Caco-2 (cell line): ENCODE measurements at regions of chr2 and their contacts with region 1.

Region 1: DNA sequence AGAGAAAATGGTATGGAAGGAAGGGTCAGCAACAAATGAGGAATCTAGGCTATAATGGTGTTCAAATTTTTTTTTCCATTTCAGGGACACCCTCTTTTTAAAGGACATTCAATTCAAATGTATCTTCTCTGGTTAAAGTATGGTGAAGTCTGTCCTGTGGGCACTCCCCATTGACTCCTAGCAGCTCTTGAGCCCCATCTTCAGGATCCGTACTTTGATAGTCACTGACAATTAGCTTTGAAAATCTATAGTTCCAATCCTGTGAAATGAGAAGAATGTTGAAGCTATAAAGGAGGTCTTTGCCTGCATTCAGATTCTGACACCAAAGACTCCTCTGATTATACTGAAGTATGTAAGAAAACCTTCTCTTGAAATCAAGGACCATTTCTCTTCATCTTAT is 43.3 kb downstream of the KCNH7 start:
- DNase-seq: peak; percentile 35 to 46
- H3K4me3 ChIP-seq: no peak overlapping the region
- H3K4me3 Mint-ChIP-seq: no peak overlapping the region
- H3K27ac Mint-ChIP-seq: no peak overlapping the region
- H3K4me1 ChIP-seq: no peaks in the 10 kb centered on the region
- H3K4me1 Mint-ChIP-seq: peaks cover 7% of the 10 kb centered on the region
- H3K27me3 ChIP-seq: no peaks in the 10 kb centered on the region
- H3K27me3 Mint-ChIP-seq: no peaks in the 10 kb centered on the region
- CTCF ChIP-seq: peak; percentile 40 to 70

Region 2: GRCh38 chr2:162333968-162334367 is 461.3 kb before region 1 on chr2:
- CTCF ChIA-PET with region 1: no interaction called
- POLR2A ChIA-PET with region 1: no interaction called
- intact Hi-C with region 1: loop called (anchors 5 kb)
- DNase-seq: peak; percentile 51
- H3K4me3 ChIP-seq: no peak overlapping the region
- H3K4me3 Mint-ChIP-seq: no peak overlapping the region
- H3K27ac Mint-ChIP-seq: no peak overlapping the region
- H3K4me1 ChIP-seq: no peaks in the 10 kb centered on the region
- H3K4me1 Mint-ChIP-seq: no peaks in the 10 kb centered on the region
- H3K27me3 ChIP-seq: no peaks in the 10 kb centered on the region
- H3K27me3 Mint-ChIP-seq: peaks cover 3% of the 10 kb centered on the region
- CTCF ChIP-seq: peak; percentile 62 to 69

Region 3: DNA sequence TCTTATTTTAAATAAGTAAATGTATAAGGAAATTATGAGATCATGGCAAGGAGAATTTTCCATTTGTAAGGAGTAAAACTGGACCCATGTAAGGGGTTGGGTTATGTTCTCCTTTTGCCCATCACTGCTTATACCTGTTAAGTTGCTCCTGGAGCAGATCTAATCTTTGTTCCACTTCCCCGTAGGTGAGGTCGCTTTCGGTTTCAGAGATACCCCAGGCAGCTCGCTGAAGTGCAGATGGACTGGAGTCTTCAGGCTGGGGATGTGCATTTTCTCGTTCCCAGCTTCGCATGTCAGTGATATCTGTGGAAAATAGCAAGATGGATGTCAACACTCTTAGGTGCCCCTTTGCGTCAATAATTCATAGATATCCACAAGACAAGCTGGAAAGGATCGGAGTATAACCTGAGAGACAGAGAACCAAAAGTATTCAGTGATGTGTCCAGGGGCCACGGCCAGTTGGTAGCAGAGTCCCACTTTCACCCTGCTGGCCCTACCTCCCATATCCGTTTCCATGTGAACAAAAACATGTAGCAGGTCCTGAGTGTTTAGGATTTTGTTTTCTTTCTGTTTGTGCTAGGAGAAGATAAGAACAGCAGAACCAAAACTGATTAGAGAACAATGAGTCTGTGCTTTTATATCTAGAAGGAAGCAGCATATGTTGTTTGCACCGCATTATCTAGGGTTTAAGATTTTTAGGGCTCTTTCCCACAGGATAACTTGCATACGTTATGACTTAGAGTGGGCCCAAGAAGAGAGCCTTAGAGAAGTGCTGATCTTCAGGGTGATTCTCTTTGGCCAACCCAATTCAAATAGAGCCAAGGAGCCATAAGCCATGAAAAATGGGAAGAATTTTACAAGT is 415.4 kb before region 1 on chr2:
- CTCF ChIA-PET with region 1: no interaction called
- POLR2A ChIA-PET with region 1: no interaction called
- intact Hi-C with region 1: loop called (anchors 10 kb)
- DNase-seq: no peak
- H3K4me3 ChIP-seq: no peak overlapping the region
- H3K4me3 Mint-ChIP-seq: no peak overlapping the region
- H3K27ac Mint-ChIP-seq: no peak overlapping the region
- H3K4me1 ChIP-seq: no peaks in the 10 kb centered on the region
- H3K4me1 Mint-ChIP-seq: no peaks in the 10 kb centered on the region
- H3K27me3 ChIP-seq: no peaks in the 10 kb centered on the region
- H3K27me3 Mint-ChIP-seq: peaks cover 11% of the 10 kb centered on the region
- CTCF ChIP-seq: no peak

Region 4: DNA sequence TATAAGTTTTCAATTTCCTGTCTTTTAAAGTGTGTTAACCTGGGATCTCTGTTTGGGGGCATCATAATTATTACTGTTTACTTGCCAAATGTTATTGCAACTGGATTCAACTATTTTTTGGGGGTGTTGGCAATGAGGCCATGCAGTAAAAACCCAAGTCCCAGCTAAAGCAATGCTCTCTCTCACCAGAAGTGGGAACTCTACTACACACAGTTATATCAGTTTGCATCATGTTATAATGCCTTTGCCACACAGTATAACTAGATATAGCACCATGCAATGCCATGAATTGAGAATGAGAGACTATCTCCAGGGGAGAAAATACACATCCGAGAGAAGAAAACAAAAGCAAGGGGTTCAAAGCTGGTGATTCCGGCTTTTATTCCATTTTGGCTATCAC is 372.4 kb before region 1 on chr2:
- CTCF ChIA-PET with region 1: no interaction called
- POLR2A ChIA-PET with region 1: no interaction called
- intact Hi-C with region 1: loop called (anchors 10 kb)
- DNase-seq: no peak
- H3K4me3 ChIP-seq: no peak overlapping the region
- H3K4me3 Mint-ChIP-seq: no peak overlapping the region
- H3K27ac Mint-ChIP-seq: no peak overlapping the region
- H3K4me1 ChIP-seq: no peaks in the 10 kb centered on the region
- H3K4me1 Mint-ChIP-seq: no peaks in the 10 kb centered on the region
- H3K27me3 ChIP-seq: no peaks in the 10 kb centered on the region
- H3K27me3 Mint-ChIP-seq: peaks cover 3% of the 10 kb centered on the region
- CTCF ChIP-seq: no peak

Region 5: GRCh38 chr2:162581959-162582798 is 213.1 kb before region 1 on chr2:
- CTCF ChIA-PET with region 1: no interaction called
- POLR2A ChIA-PET with region 1: no interaction called
- intact Hi-C with region 1: loop called (anchors 1 kb)
- DNase-seq: peak; percentile 77 to 84
- H3K4me3 ChIP-seq: no peak overlapping the region
- H3K4me3 Mint-ChIP-seq: no peak overlapping the region
- H3K27ac Mint-ChIP-seq: peak overlapping the region; percentile 62
- H3K4me1 ChIP-seq: peaks cover 46% of the 10 kb centered on the region
- H3K4me1 Mint-ChIP-seq: peaks cover 47% of the 10 kb centered on the region
- H3K27me3 ChIP-seq: no peaks in the 10 kb centered on the region
- H3K27me3 Mint-ChIP-seq: no peaks in the 10 kb centered on the region
- CTCF ChIP-seq: no peak